Activated CD4-positive, alpha-beta memory T cell treated with anti-CD3 and anti-CD28 coated beads for 36 hours (primary cell): ENCODE measurements at regions of chr19 and their contacts with region 1.

Region 1: GRCh38 chr19:58380722-58381466 is at the start of gene ZNF837:
- DNase-seq: peak; percentile 99
- H3K4me3 Mint-ChIP-seq: peak within 1 kb of the TSS; percentile 84
- H3K27ac Mint-ChIP-seq: peak within 1 kb of the TSS; percentile 92
- H3K4me1 Mint-ChIP-seq: peaks cover 25% of the 10 kb centered on the region
- H3K27me3 Mint-ChIP-seq: no peaks in the 10 kb centered on the region
- total RNA-seq, gene ZNF837: 2.1 to 2.4 TPM

Region 2: DNA sequence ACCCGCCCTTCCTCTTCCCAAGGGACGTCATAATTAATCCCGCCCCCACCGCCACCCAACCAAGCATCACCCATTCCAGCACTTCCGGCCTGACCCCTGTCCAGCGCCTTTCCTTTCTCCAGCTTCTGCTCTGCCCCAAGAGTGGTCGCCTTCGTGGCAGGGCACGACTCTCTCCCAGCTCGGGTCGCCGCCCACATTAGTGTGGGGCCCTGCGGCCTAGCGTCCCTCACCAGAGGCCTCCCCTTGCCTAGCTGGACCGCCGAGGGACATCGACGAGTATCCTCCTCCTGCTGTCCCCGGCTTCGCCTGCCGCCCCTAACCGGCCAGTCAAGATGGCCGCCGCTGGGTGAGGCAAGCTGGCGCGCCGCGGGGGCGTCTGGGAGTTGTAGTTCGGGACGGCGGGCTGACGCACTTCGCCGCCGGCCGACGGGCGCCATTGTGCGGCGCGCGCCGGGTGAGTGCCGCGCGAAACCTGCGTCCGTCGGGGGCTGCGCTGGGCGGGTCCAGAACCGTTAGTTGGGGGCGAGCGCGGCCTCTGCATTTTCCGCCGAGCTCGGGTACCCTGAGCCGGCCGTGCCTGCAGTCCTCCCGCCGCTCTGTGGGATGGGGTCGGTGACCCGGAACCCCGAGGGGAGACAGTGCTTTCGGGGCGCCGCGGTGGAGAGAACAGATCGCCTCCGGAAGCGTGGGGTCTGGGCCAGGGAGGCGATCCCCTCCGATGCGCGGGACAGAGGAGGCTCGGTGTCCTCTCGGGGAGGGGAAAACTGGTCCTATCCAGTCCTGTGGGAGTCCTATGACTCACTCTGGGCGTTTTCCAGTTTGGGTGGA is 197.7 kb before region 1 on chr19 and contains the start of gene ZNF274:
- CTCF ChIA-PET with region 1: no interaction called
- POLR2A ChIA-PET with region 1: no interaction called
- intact Hi-C with region 1: loop called (anchors 1 kb)
- DNase-seq: peak; percentile 95
- H3K4me3 Mint-ChIP-seq: peak within 1 kb of the TSS; percentile 92
- H3K27ac Mint-ChIP-seq: peak within 1 kb of the TSS; percentile 99
- H3K4me1 Mint-ChIP-seq: peaks cover 16% of the 10 kb centered on the region
- H3K27me3 Mint-ChIP-seq: no peaks in the 10 kb centered on the region
- total RNA-seq, gene ZNF274: 19.1 to 19.6 TPM

Region 3: DNA sequence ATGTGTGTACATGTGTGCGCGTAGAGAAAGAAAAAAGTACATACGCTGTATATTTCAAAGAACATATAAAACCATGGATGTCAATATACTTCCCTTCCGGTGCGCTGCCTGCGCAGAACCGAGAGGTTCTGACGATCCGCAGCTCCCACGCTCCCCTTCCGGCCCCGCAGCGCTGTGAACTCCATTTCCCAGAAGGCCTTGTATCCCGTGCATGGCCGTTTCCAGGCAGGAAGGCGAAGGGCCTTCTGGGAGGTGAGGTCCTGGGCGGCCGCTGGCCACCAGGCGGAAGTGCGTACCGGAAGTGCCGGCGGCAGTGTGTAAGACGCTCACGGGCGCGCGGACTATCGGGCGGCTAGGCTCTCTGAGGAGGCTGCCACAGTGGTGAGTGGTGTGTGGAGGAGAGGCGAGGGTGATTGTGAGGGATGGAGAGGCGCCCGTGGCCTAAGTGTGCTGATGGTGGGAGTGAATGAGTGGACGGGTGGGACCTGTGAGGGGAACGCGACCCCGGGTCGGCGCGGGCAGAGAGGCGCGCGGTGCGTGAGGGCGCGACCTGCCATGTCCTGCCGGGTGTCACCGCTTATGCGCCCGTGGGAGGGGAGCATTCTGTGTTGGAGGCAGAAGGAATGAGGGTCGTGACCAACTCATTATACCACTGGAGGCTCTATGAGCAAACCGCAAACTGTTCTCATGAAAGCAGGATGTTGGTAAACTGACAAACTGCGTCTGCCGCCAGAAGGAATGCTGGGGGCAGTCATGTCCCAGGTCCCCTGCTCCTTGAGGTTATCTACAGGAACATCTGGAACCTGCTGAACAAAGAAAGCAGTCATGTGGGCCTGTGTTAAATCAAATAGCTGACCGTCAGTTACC is 75.6 kb before region 1 on chr19 and contains the start of gene ERVK3-1:
- CTCF ChIA-PET with region 1: no interaction called
- POLR2A ChIA-PET with region 1: no interaction called
- intact Hi-C with region 1: loop called (anchors 1 kb)
- DNase-seq: peak; percentile 97
- H3K4me3 Mint-ChIP-seq: peak within 1 kb of the TSS; percentile 89
- H3K27ac Mint-ChIP-seq: peak within 1 kb of the TSS; percentile 92
- H3K4me1 Mint-ChIP-seq: peaks cover 42% of the 10 kb centered on the region
- H3K27me3 Mint-ChIP-seq: no peaks in the 10 kb centered on the region
- total RNA-seq, gene ERVK3-1: 37.1 to 42.3 TPM

Region 4: GRCh38 chr19:58362272-58362994 is 18.5 kb before region 1 on chr19 and contains the start of gene ZNF497:
- CTCF ChIA-PET with region 1: no interaction called
- POLR2A ChIA-PET with region 1: interaction called, 6 read pairs
- intact Hi-C with region 1: loop called (anchors 1 kb)
- DNase-seq: peak; percentile 98
- H3K4me3 Mint-ChIP-seq: peak within 1 kb of the TSS; percentile 94
- H3K27ac Mint-ChIP-seq: peak within 1 kb of the TSS; percentile 89
- H3K4me1 Mint-ChIP-seq: peaks cover 8% of the 10 kb centered on the region
- H3K27me3 Mint-ChIP-seq: no peaks in the 10 kb centered on the region
- total RNA-seq, gene ZNF497: 0.31 to 0.93 TPM

Region 5: GRCh38 chr19:58408152-58409009 is 27.5 kb after region 1 on chr19 and contains the start of gene ZNF584:
- CTCF ChIA-PET with region 1: no interaction called
- POLR2A ChIA-PET with region 1: interaction called, 3 read pairs
- intact Hi-C with region 1: loop called (anchors 1 kb)
- DNase-seq: peak; percentile 97
- H3K4me3 Mint-ChIP-seq: peak within 1 kb of the TSS; percentile 83
- H3K27ac Mint-ChIP-seq: peak within 1 kb of the TSS; percentile 95
- H3K4me1 Mint-ChIP-seq: peaks cover 31% of the 10 kb centered on the region
- H3K27me3 Mint-ChIP-seq: no peaks in the 10 kb centered on the region
- total RNA-seq, gene ZNF584: 8.3 to 10.7 TPM

Region 6: DNA sequence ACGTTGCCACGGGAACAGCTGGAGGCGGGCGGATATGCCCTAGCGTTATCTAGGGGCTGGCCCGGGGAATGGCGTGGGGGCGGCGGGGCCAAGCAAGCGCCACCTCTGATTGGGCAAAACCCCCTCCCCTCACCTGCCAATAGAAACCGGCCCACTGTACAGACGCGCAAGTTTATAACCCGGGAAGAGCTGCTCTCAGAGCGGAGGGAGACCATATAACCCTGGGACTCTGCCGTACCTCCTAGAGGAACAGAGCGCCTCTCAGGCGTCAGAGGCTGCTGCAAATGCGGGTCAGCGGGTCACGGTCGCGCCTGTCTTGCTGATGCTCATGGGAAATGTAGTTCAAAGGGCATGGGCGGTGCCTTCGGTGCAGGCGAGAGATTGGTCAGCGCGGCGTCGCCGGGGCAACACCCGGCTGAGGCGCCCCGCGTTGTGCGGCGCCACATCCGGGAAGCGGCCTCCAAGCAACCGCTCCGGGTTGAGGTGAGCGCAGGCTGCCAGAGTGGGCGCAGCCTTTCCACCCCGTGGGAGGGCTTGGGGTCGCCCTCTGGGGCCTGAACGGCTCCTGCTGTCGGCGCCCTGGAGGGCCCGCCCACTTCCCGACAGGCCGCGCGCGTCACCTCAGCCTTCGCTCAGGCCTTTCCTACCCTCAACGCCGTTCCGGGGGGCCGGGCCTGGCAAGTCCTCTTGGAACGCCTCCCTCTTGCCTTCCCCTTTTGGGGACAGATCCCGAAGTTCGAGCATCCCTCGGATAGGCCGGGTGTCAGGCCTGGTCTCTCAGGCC is 95.0 kb after region 1 on chr19 and contains the start of gene ZNF446:
- CTCF ChIA-PET with region 1: no interaction called
- POLR2A ChIA-PET with region 1: no interaction called
- intact Hi-C with region 1: loop called (anchors 2 kb)
- DNase-seq: peak; percentile 98
- H3K4me3 Mint-ChIP-seq: peak within 1 kb of the TSS; percentile 93
- H3K27ac Mint-ChIP-seq: peak within 1 kb of the TSS; percentile 99
- H3K4me1 Mint-ChIP-seq: peaks cover 16% of the 10 kb centered on the region
- H3K27me3 Mint-ChIP-seq: no peaks in the 10 kb centered on the region
- total RNA-seq, gene ZNF446: 6.4 to 7.5 TPM

Region 7: DNA sequence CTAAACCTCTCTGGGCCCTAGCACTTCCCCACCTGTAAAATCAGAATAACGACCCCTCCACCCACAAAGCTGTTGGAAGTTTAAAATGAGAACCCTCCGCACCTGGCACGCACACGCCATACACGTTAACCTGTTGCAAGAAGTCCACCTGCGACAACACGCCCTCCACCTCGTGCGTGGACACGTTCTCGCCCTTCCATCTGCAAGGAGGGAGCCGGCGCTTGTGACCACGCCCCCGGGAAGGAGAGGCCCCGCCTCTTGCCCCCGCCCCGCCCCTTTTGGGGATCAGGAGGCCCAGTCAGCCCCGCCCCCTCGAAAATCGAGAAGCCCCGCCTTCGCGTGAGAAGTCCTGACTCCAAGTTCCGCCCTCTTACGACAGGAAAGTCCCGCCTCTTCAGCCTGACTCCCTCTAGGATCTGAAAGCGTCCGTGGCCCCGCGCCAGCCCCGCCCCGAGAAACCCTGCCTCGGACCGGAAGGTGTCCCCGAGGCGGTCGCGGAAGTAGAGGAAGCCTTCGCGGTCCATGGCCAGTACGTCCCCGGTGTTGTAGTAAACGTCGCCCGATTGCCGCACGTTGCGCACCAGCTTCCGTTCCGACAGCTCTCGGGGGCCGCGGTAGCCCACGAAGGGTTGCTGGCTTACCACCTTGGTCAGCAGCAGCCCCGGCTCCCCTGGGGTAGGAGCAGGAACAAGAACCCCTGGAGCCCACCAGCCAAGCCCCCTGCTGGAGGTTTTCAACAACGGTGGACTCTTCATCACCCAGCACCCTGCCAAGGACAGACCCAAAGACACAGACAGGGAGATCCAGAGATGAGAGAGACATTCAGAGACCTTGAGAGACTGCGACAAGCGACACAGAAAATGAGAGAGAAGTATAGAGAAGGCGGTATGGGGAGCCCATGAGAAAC is 118.4 kb after region 1 on chr19:
- CTCF ChIA-PET with region 1: no interaction called
- POLR2A ChIA-PET with region 1: no interaction called
- intact Hi-C with region 1: loop called (anchors 1 kb)
- DNase-seq: peak; percentile 100
- H3K4me3 Mint-ChIP-seq: peak overlapping the region; percentile 89
- H3K27ac Mint-ChIP-seq: peak overlapping the region; percentile 80
- H3K4me1 Mint-ChIP-seq: peaks cover 27% of the 10 kb centered on the region
- H3K27me3 Mint-ChIP-seq: no peaks in the 10 kb centered on the region